Naive thymus-derived CD4-positive, alpha-beta T cell (primary cell): ENCODE measurements at regions of chr15 and their contacts with region 1.

Region 1: DNA sequence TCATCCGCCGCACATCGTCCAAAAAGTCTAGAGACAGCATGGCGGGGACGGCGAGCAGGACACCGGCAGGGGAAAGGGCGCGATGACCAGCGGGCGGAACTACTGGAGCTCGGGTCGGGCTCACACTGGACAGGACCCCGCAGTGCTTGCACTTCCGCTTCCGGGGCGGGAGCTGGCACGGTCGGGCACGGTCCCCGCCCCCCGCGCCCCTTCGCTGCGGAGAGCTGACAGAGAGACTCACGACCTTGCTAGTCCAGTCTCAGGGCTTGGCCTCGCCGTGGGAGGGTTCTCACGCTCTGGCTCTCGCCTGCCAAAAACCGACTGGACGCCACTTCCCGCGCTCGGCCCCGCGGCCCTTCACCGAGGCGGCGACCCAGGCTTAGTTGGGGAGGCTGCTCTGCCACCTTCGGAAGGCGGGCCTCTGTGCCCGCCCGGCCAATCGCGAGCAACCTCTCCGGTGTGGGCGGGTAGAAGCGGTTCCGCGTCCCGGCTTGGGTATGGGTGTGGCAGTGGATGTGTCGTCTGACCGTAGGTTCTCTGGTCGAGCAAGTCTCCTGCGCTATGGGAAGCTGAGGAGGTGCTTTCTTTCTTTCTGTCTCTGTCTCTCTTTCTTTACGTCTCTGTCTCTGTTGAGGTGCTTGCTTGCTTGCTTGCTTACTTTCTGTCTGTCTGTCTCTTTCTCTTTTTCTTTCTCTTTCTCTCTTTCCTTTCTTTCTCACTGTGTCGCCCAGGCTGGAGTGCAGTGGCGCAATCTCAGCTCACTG is at the start of gene SEC11A:
- DNase-seq: peak; percentile 86 to 94 (median 90)
- ATAC-seq: peak; percentile 98
- H3K4me3 ChIP-seq: peak within 1 kb of the TSS; percentile 69
- H3K4me3 Mint-ChIP-seq: peak within 1 kb of the TSS; percentile 86 to 100 (median 94)
- H3K27ac ChIP-seq: peak within 1 kb of the TSS; percentile 72
- H3K27ac Mint-ChIP-seq: peak within 1 kb of the TSS; percentile 93 to 98 (median 96)
- H3K4me1 ChIP-seq: peaks cover 17 to 23% of the 10 kb centered on the region in 2 donors
- H3K4me1 Mint-ChIP-seq: peaks cover 42 to 73% (median 55%) of the 10 kb centered on the region in 7 donors
- H3K27me3 ChIP-seq: no peaks in the 10 kb centered on the region
- H3K27me3 Mint-ChIP-seq: no peaks in the 10 kb centered on the region
- total RNA-seq, gene SEC11A: 54.3 to 108 (median 63.5) TPM

Region 2: GRCh38 chr15:84600851-84601838 is 115.1 kb before region 1 on chr15 and contains the start of gene ZSCAN2:
- CTCF ChIA-PET with region 1: no interaction called
- POLR2A ChIA-PET with region 1: interaction called, 7 read pairs
- intact Hi-C with region 1: loop called (anchors 2 to 5 kb)
- DNase-seq: peak; percentile 83 to 93 (median 90)
- ATAC-seq: peak; percentile 98
- H3K4me3 ChIP-seq: peak within 1 kb of the TSS; percentile 96
- H3K4me3 Mint-ChIP-seq: peak within 1 kb of the TSS; percentile 89 to 99 (median 96)
- H3K27ac ChIP-seq: peak within 1 kb of the TSS; percentile 77
- H3K27ac Mint-ChIP-seq: peak within 1 kb of the TSS; percentile 67 to 97 (median 88)
- H3K4me1 ChIP-seq: peaks cover 29 to 36% of the 10 kb centered on the region in 2 donors
- H3K4me1 Mint-ChIP-seq: peaks cover 53 to 89% (median 71%) of the 10 kb centered on the region in 7 donors
- H3K27me3 ChIP-seq: no peaks in the 10 kb centered on the region
- H3K27me3 Mint-ChIP-seq: no peaks in the 10 kb centered on the region
- total RNA-seq, gene ZSCAN2: 4.8 to 13.0 (median 6.8) TPM

Region 3: GRCh38 chr15:84633311-84634227 is 82.6 kb before region 1 on chr15:
- CTCF ChIA-PET with region 1: no interaction called
- POLR2A ChIA-PET with region 1: interaction called, 8 read pairs
- intact Hi-C with region 1: loop called (anchors 1 kb)
- DNase-seq: peak; percentile 48 to 77 (median 66)
- ATAC-seq: peak; percentile 67
- H3K4me3 ChIP-seq: peak overlapping the region; percentile 96
- H3K4me3 Mint-ChIP-seq: peak overlapping the region; percentile 84 to 99 (median 98)
- H3K27ac ChIP-seq: peak overlapping the region; percentile 78
- H3K27ac Mint-ChIP-seq: peak overlapping the region; percentile 79 to 98 (median 93)
- H3K4me1 ChIP-seq: peaks cover 26 to 40% of the 10 kb centered on the region in 2 donors
- H3K4me1 Mint-ChIP-seq: peaks cover 23 to 58% (median 53%) of the 10 kb centered on the region in 7 donors
- H3K27me3 ChIP-seq: no peaks in the 10 kb centered on the region
- H3K27me3 Mint-ChIP-seq: no peaks in the 10 kb centered on the region

Region 4: DNA sequence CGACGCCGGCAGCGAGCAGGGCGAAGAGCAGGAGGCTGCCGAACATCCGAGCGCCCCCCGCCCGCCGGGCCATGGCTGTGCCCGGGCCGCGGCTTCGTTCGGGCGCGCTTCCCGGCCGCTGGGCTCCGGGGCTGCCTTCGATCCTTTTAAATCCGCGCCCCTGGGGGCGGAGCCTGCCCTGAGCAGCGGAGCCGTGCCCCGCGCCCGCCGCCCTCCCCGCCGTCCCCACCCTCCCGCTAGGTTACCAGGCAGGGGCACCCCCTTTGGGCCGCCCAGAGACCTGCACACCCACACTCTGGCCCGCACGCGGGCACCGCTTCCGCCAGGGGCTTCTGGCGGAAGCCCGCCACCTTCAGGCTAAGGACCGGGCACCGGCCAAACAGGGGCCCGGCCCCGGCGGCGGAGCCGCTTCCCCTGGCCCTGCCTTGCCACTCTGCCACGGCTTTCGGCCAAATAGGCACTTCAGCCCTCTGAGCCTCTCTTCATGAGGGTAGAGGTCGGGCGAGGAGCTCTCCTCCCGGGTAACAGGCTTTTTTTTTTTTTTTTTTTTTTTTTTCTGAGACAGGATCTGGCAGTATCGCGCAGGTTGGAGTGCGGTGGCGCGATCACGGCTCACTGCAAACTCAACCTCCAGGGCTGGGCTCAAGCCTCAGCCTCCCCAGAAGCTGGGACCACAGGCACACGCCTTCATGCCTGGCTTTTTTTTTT is 58.0 kb before region 1 on chr15 and contains the start of gene NMB:
- CTCF ChIA-PET with region 1: interaction called, 8 read pairs
- POLR2A ChIA-PET with region 1: interaction called, 70 read pairs
- intact Hi-C with region 1: loop called (anchors 1 kb)
- DNase-seq: peak; percentile 76 to 88 (median 87)
- ATAC-seq: peak; percentile 82
- H3K4me3 ChIP-seq: peak within 1 kb of the TSS; percentile 73
- H3K4me3 Mint-ChIP-seq: peak within 1 kb of the TSS; percentile 78 to 86 (median 83)
- H3K27ac ChIP-seq: peak within 1 kb of the TSS; percentile 76
- H3K27ac Mint-ChIP-seq: peak within 1 kb of the TSS; percentile 74 to 93 (median 84)
- H3K4me1 ChIP-seq: peaks cover 13 to 27% of the 10 kb centered on the region in 2 donors
- H3K4me1 Mint-ChIP-seq: peaks cover 13 to 47% (median 39%) of the 10 kb centered on the region in 7 donors
- H3K27me3 ChIP-seq: no peaks in the 10 kb centered on the region
- H3K27me3 Mint-ChIP-seq: no peaks in the 10 kb centered on the region
- total RNA-seq, gene NMB: 1.2 to 3.1 (median 2.9) TPM

Region 5: DNA sequence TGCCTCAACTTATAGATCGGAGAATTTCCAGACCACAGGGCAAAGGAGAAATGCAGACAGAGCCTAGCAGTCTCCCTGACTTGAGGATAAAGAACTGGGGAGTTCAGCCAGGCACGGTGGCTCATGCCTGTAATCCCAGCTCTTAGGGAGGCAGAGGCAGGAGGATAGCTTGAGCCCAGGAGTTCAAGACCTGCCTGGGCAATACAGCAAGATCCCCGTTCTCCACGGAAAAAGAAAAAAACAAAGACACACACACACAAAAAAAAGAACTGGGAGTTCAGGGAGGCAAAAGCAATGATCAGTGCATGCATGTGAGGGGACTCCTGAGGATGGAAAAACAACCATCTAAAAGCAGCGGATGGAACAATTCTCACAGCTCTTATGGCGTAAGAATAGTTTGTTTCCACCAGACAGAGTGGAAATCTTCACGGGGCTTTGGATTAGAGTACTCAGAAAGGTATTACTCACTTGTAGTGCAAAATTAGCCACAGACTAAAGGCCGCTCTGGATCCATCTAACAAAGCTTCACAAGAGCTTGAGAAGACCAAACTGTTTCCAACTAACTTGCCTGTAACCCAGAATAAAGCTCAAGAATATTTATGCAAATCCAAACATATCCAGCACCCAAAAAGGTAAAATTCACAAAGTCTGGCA is 16.6 kb before region 1 on chr15:
- CTCF ChIA-PET with region 1: interaction called, 3 read pairs
- POLR2A ChIA-PET with region 1: interaction called, 10 read pairs
- intact Hi-C with region 1: no loop called
- DNase-seq: no peak
- ATAC-seq: no peak
- H3K4me3 ChIP-seq: no peak overlapping the region
- H3K4me3 Mint-ChIP-seq: peak overlapping the region in 8 of 10 donors; percentile 5 to 52 (median 36)
- H3K27ac ChIP-seq: no peak overlapping the region
- H3K27ac Mint-ChIP-seq: peak overlapping the region; percentile 13 to 67 (median 21)
- H3K4me1 ChIP-seq: peaks cover 8 to 30% of the 10 kb centered on the region in 2 donors
- H3K4me1 Mint-ChIP-seq: peaks cover 35 to 78% (median 71%) of the 10 kb centered on the region in 7 donors
- H3K27me3 ChIP-seq: no peaks in the 10 kb centered on the region
- H3K27me3 Mint-ChIP-seq: no peaks in the 10 kb centered on the region

Region 6: GRCh38 chr15:84734794-84735479 is 18.7 kb after region 1 on chr15:
- CTCF ChIA-PET with region 1: interaction called, 15 read pairs
- POLR2A ChIA-PET with region 1: interaction called, 453 read pairs
- intact Hi-C with region 1: loop called (anchors 1 kb)
- DNase-seq: peak in 8 of 9 donors; percentile 69 to 83 (median 78)
- ATAC-seq: peak; percentile 85
- H3K4me3 ChIP-seq: peak overlapping the region; percentile 56
- H3K4me3 Mint-ChIP-seq: peak overlapping the region; percentile 71 to 89 (median 84)
- H3K27ac ChIP-seq: peak overlapping the region; percentile 67
- H3K27ac Mint-ChIP-seq: peak overlapping the region; percentile 89 to 96 (median 93)
- H3K4me1 ChIP-seq: peaks cover 34 to 47% of the 10 kb centered on the region in 2 donors
- H3K4me1 Mint-ChIP-seq: peaks cover 36 to 62% (median 50%) of the 10 kb centered on the region in 7 donors
- H3K27me3 ChIP-seq: no peaks in the 10 kb centered on the region
- H3K27me3 Mint-ChIP-seq: no peaks in the 10 kb centered on the region

Region 7: GRCh38 chr15:84761607-84762131 is 45.5 kb after region 1 on chr15:
- CTCF ChIA-PET with region 1: interaction called, 3 read pairs
- POLR2A ChIA-PET with region 1: interaction called, 7 read pairs
- intact Hi-C with region 1: loop called in 1 of 2 experiments (anchors 1 kb)
- DNase-seq: peak in 6 of 9 donors; percentile 14 to 42 (median 31)
- ATAC-seq: peak; percentile 37
- H3K4me3 ChIP-seq: no peak overlapping the region
- H3K4me3 Mint-ChIP-seq: no peak overlapping the region
- H3K27ac ChIP-seq: peak overlapping the region; percentile 51
- H3K27ac Mint-ChIP-seq: no peak overlapping the region
- H3K4me1 ChIP-seq: peaks cover 24 to 36% of the 10 kb centered on the region in 2 donors
- H3K4me1 Mint-ChIP-seq: peaks cover 5 to 24% (median 12%) of the 10 kb centered on the region in 7 donors
- H3K27me3 ChIP-seq: no peaks in the 10 kb centered on the region
- H3K27me3 Mint-ChIP-seq: no peaks in the 10 kb centered on the region

Region 8: DNA sequence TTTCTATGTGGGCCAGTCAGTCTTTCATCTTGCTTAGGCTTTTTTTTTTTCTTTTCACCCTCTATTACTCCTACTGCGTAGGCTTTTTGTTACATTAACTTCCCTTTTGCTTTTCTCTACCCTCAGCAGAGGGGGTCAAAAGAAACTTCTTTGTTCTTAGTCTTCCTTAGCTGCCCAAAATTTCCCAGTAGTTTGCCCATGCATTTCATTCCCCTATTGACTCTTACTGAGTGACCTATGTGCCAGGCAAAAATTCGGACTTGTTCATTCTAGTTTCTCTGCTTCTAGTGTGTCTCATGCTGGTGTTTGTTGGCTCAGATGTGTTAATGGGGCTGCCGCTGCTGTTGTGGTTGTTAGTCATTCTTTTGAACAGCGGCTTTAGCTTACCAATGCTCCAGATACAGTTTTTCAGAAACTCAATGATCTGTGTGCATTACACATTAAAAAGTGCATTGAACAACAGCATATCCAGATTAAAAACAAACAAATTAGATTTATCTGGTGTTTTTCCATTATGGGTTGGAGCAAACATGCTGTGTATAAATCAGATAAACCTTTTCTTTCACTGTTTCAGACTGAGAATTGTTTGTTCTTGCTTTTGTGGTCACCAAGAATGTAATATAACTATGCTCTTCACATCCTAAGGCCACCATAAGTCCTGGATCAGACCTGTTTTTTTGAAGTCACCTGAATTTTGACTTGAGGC is 308.4 kb after region 1 on chr15:
- CTCF ChIA-PET with region 1: no interaction called
- POLR2A ChIA-PET with region 1: no interaction called
- intact Hi-C with region 1: no loop called
- DNase-seq: no peak
- ATAC-seq: no peak
- H3K4me3 ChIP-seq: no peak overlapping the region
- H3K4me3 Mint-ChIP-seq: peak overlapping the region in 1 of 10 donors; percentile 0
- H3K27ac ChIP-seq: no peak overlapping the region
- H3K27ac Mint-ChIP-seq: peak overlapping the region in 1 of 9 donors; percentile 1
- H3K4me1 ChIP-seq: peaks cover 7 to 8% of the 10 kb centered on the region in 2 donors
- H3K4me1 Mint-ChIP-seq: peaks cover 32 to 85% (median 64%) of the 10 kb centered on the region in 7 donors
- H3K27me3 ChIP-seq: no peaks in the 10 kb centered on the region
- H3K27me3 Mint-ChIP-seq: no peaks in the 10 kb centered on the region

Region 9: GRCh38 chr15:85329561-85330422 is 613.6 kb after region 1 on chr15:
- CTCF ChIA-PET with region 1: no interaction called
- POLR2A ChIA-PET with region 1: no interaction called
- intact Hi-C with region 1: no loop called
- DNase-seq: peak in 8 of 9 donors; percentile 18 to 53 (median 46)
- ATAC-seq: peak; percentile 60
- H3K4me3 ChIP-seq: peak overlapping the region; percentile 57
- H3K4me3 Mint-ChIP-seq: peak overlapping the region; percentile 88 to 100 (median 96)
- H3K27ac ChIP-seq: peak overlapping the region; percentile 65
- H3K27ac Mint-ChIP-seq: peak overlapping the region; percentile 74 to 97 (median 95)
- H3K4me1 ChIP-seq: peaks cover 18 to 24% of the 10 kb centered on the region in 2 donors
- H3K4me1 Mint-ChIP-seq: peaks cover 34 to 54% (median 48%) of the 10 kb centered on the region in 7 donors
- H3K27me3 ChIP-seq: no peaks in the 10 kb centered on the region
- H3K27me3 Mint-ChIP-seq: no peaks in the 10 kb centered on the region